ENCODE measurements at regions of chr20 and their contacts with region 1.

Region 1: DNA sequence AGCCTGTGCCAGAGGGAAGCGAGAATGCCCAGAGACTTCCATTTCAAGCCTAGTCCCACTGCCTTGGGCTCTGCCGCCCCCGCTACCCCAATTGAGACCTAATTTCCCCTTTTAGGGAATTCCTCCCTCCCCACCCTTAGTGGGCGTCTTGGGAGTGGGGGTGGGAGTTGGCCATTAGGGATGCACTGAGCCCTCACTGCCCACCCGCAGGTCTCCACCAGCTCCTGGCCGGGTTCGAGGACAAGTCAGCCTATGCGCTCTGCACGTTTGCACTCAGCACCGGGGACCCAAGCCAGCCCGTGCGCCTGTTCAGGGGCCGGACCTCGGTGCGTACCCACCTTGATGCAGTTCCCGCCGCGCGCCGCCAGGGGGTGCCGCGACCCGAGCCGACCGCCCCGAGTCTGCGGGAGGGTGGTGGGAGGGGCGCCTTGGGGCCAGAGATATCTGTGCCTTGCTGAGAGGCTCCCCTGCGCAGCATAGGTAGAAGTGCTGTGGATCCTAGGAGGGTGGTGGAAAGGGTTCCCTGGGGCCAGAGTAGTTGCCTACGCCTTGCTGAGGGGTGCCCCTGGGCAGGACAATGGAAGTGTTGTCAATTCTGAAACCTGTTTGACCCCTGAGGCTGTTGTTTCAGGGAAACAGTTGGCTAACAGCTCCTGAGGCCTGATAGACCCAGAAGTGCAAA is 9.2 kb downstream of the ITPA start:
- DNase-seq: peak; percentile 16 to 81 (median 65)
- ATAC-seq: peak; percentile 60 to 82 (median 72)
- H3K4me3 ChIP-seq: no peak overlapping the region
- H3K4me3 Mint-ChIP-seq: no peak overlapping the region
- H3K27ac ChIP-seq: no peak overlapping the region
- H3K27ac Mint-ChIP-seq: no peak overlapping the region
- H3K4me1 ChIP-seq: peaks cover 7 to 24% of the 10 kb centered on the region in 2 experiments
- H3K4me1 Mint-ChIP-seq: peaks cover 9 to 19% (median 16%) of the 10 kb centered on the region in 3 donors
- H3K27me3 ChIP-seq: no peaks in the 10 kb centered on the region
- H3K27me3 Mint-ChIP-seq: no peaks in the 10 kb centered on the region

Region 2: DNA sequence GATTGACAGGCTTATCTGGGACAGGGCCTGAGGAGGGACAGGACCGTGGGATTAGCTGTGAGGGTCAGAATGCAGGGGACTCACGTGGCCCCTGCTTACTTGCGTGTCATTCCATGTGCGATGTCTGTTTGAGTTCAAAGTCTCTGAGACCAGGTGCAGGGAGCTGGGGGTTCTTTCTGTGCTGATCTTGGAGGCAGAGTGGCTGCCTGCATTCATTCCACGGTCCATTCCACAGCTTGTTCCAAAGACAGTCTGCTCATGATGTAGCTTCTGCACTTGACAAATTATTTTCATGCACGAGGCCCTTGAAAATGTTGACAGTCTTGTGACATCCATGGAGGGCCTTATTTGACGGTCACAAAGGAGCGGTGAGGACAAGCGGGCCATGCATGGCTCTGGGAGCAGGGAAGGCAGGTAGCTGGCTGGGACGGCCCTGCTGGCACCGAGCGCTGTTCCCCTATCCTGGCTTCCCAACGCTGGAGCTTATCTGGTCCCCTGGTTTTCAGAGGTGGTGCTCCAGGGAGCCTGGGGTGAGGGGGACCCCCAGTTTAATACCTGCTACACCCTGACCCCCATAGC is 953.2 kb after region 1 on chr20:
- CTCF ChIA-PET with region 1: interaction called in 1 of 2 experiments, 10 read pairs
- POLR2A ChIA-PET with region 1: no interaction called
- DNase-seq: peak in 2 of 35 experiments; percentile 16 to 22
- ATAC-seq: peak in 2 of 4 experiments; percentile 1 to 8
- H3K4me3 ChIP-seq: peak overlapping the region in 1 of 2 donors; percentile 67
- H3K4me3 Mint-ChIP-seq: peak overlapping the region; percentile 59 to 74 (median 60)
- H3K27ac ChIP-seq: peak overlapping the region; percentile 38
- H3K27ac Mint-ChIP-seq: peak overlapping the region; percentile 85 to 88
- H3K4me1 ChIP-seq: peaks cover 10 to 31% of the 10 kb centered on the region in 2 experiments
- H3K4me1 Mint-ChIP-seq: peaks cover 30 to 35% (median 32%) of the 10 kb centered on the region in 3 donors
- H3K27me3 ChIP-seq: peaks cover 0 to 17% of the 10 kb centered on the region in 2 experiments
- H3K27me3 Mint-ChIP-seq: no peaks in the 10 kb centered on the region

Measured in T-cell (primary cell).